ENCODE measurements at regions of chr20 and their contacts with region 1.

Region 1: DNA sequence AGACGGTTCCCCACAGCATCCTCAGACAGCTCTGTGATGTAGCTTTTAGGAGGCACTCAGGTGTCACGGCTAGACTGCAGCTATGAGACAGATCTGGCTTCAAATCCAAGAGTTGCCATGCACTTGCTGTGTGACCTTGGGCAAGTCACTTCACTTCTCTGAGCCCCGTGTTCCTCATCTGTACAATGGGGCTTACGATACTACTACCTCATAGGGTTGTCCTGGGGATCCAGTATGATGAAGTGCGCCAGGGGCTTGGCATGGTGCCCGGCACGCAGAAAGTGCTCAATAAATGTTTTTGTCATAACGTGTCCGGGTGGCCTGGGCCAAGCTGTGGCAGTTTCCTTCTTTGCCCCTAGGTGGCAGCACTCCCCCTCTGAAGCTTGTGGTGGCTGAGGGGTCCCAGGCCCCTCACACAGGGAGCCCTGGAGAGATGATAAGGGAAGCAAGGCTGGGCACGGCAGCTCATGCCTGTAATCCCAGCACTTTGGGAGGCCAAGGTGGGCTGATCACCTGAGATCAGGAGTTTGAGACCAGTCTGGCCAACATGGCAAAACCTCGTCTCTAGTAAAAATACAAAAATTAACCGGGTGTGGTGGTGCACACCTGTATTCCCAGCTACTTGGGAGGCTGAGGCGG is 19.1 kb upstream of the CHMP4B start:
- DNase-seq: peak; percentile 68
- ATAC-seq: peak; percentile 69
- H3K4me3 Mint-ChIP-seq: no peak overlapping the region
- H3K27ac Mint-ChIP-seq: peak overlapping the region; percentile 29
- H3K4me1 Mint-ChIP-seq: peaks cover 25% of the 10 kb centered on the region
- H3K27me3 Mint-ChIP-seq: no peaks in the 10 kb centered on the region

Region 2: DNA sequence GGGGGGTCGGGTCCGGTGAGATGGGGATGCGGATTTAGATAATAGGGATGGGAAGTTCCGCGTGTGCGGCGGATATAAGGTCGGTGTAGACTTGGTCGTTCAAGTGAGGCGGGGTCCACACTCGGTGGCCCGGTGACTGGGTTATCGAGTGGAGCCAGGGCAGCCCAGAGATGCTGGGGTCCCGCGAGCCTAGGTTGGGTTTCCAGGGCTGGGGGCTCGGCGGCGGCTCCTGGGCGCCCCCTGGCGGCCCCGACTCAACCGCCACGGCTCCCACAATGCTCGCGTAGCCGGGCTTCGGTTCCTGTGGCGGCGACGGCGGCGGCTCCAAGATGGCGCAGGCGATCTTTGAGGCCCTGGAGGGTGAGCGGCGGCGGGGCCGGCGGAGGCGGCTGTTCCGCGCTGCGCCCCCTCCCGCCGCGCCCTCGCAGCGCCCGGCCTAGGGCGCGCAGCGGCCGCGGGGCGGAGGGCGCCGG is 60.3 kb before region 1 on chr20 and contains the start of gene ZNF341:
- CTCF ChIA-PET with region 1: interaction called, 10 read pairs
- DNase-seq: peak; percentile 90
- ATAC-seq: peak; percentile 88
- H3K4me3 Mint-ChIP-seq: peak within 1 kb of the TSS; percentile 85
- H3K27ac Mint-ChIP-seq: peak within 1 kb of the TSS; percentile 93
- H3K4me1 Mint-ChIP-seq: peaks cover 27% of the 10 kb centered on the region
- H3K27me3 Mint-ChIP-seq: no peaks in the 10 kb centered on the region
- total RNA-seq, gene ZNF341: 6.5 to 7.4 TPM

Region 3: GRCh38 chr20:33810885-33811777 is 19.1 kb after region 1 on chr20 and contains the start of gene CHMP4B:
- CTCF ChIA-PET with region 1: interaction called, 16 read pairs
- DNase-seq: peak; percentile 99
- ATAC-seq: peak; percentile 99
- H3K4me3 Mint-ChIP-seq: peak within 1 kb of the TSS; percentile 100
- H3K27ac Mint-ChIP-seq: peak within 1 kb of the TSS; percentile 96
- H3K4me1 Mint-ChIP-seq: peaks cover 32% of the 10 kb centered on the region
- H3K27me3 Mint-ChIP-seq: no peaks in the 10 kb centered on the region
- total RNA-seq, gene CHMP4B: 79.4 to 81.9 TPM